Dorsolateral prefrontal cortex (tissue), 120 donors: ENCODE measurements at regions of chr10 and their contacts with region 1.

Region 1: DNA sequence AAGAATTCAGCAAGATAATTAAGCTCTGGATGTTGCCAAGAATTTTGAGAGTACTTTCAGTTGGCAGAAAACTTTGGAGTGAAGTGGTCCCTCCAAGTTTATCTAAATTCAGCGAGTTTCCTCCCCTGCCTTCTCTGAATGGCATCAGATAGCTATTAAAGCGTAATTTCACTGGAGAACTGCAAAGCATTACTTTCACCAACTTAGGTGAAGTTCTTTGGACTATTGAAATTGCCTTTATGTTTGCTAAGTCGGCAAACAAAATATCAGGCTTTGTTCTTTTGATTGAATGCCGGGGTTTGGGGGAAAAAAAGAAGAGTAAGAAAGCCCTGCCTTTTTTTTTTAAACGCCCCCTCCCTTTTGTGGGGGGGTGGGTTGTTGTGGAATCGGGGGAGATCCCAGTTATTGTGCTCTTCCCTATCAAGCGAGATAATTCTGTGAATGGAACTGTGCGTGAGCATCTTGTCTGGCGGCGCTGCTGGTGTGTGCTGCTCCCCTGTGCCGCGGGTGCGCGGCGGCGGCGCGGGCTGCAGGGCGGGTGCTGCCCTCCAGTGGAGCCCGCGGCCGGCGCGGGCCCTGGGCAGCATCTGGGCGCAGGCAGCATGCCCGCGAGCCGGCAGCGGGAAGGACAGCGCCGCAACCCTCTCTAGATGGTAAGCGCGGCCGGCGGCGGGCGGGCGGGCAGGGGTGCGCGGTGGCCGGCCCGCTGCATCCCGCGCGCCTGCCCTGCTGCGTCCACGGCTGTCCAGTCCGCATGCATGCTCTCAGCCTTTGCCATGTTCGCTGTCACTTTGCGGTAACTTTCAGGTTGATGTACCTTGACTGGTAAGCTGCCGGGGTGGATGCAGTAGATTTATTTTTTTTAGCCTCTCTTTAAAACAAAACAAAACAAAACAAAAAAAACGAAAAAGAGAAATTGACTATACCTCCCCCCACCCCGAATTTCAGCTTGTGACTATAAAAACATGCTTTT is 176.5 kb downstream of the TCF7L2 start:
- DNase-seq: peak; percentile 39 to 85 (median 68)
- H3K4me3 ChIP-seq: peak overlapping the region; percentile 8 to 67 (median 49)
- H3K27ac ChIP-seq: no peak overlapping the region
- H3K27me3 ChIP-seq: no peaks in the 10 kb centered on the region
- CTCF ChIP-seq: peak in 55 of 56 donors; percentile 36 to 97 (median 73)

Region 2: GRCh38 chr10:112471878-112472487 is 654.5 kb before region 1 on chr10:
- intact Hi-C with region 1: loop called (anchors 10 kb)
- DNase-seq: no peak
- H3K4me3 ChIP-seq: no peak overlapping the region
- H3K27ac ChIP-seq: peak overlapping the region in 18 of 59 donors; percentile 3 to 53 (median 32)
- H3K27me3 ChIP-seq: no peaks in the 10 kb centered on the region
- CTCF ChIP-seq: peak; percentile 53 to 85 (median 72)

Region 3: GRCh38 chr10:112565434-112566053 is 561.0 kb before region 1 on chr10:
- intact Hi-C with region 1: loop called (anchors 10 kb)
- DNase-seq: peak in 1 of 10 donors; percentile 24
- H3K4me3 ChIP-seq: no peak overlapping the region
- H3K27ac ChIP-seq: no peak overlapping the region
- H3K27me3 ChIP-seq: no peaks in the 10 kb centered on the region
- CTCF ChIP-seq: peak in 55 of 56 donors; percentile 42 to 86 (median 67)

Region 4: GRCh38 chr10:112949875-112950507 is 176.5 kb before region 1 on chr10 and contains the start of gene TCF7L2:
- intact Hi-C with region 1: loop called (anchors 5 kb)
- DNase-seq: peak; percentile 38 to 95 (median 91)
- H3K4me3 ChIP-seq: peak within 1 kb of the TSS; percentile 26 to 86 (median 73)
- H3K27ac ChIP-seq: peak within 1 kb of the TSS in 55 of 59 donors; percentile 23 to 92 (median 76)
- H3K27me3 ChIP-seq: no peaks in the 10 kb centered on the region
- CTCF ChIP-seq: no peak
- total RNA-seq, gene TCF7L2: 15.8 to 51.9 (median 27.4) TPM

Region 5: GRCh38 chr10:112981553-112981952 is 145.0 kb before region 1 on chr10:
- intact Hi-C with region 1: no loop called
- DNase-seq: no peak
- H3K4me3 ChIP-seq: no peak overlapping the region
- H3K27ac ChIP-seq: no peak overlapping the region
- H3K27me3 ChIP-seq: no peaks in the 10 kb centered on the region
- CTCF ChIP-seq: no peak

Region 6: DNA sequence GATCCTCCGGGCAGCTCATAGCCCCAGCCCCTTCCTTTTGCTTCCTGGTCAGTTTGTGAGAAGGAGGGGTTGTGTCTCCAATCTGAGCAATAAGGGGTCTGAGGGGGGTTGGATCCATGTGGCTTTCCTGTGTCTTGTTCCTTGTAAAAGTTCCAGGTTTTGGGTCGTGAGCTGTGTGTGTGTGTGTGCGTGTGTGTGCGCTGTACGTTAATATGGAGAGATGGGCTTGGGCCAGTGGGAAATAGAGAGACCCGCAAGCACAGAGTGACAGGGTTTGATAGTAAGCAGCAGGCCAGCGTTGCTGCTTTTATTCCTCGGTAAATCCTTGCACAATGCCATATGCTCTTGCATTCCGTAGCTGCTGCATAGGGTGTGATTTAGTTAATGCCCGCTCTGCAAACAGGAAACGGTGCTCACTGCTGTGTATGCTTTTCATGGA is 68.0 kb before region 1 on chr10:
- intact Hi-C with region 1: loop called in 1 of 2 experiments (anchors 5 kb)
- DNase-seq: no peak
- H3K4me3 ChIP-seq: peak overlapping the region in 53 of 59 donors; percentile 0 to 63 (median 41)
- H3K27ac ChIP-seq: peak overlapping the region in 52 of 59 donors; percentile 23 to 91 (median 84)
- H3K27me3 ChIP-seq: no peaks in the 10 kb centered on the region
- CTCF ChIP-seq: no peak

Region 7: GRCh38 chr10:113385021-113385999 is 258.8 kb after region 1 on chr10:
- intact Hi-C with region 1: loop called (anchors 5 to 10 kb)
- DNase-seq: peak; percentile 43 to 87 (median 80)
- H3K4me3 ChIP-seq: peak overlapping the region in 16 of 59 donors; percentile 2 to 40 (median 18)
- H3K27ac ChIP-seq: peak overlapping the region in 6 of 59 donors; percentile 11 to 56 (median 22)
- H3K27me3 ChIP-seq: peaks cover 0 to 13% (median 0%) of the 10 kb centered on the region in 45 donors
- CTCF ChIP-seq: peak; percentile 62 to 97 (median 88)